ENCODE measurements at regions of chr9 and their contacts with region 1.

Region 1: DNA sequence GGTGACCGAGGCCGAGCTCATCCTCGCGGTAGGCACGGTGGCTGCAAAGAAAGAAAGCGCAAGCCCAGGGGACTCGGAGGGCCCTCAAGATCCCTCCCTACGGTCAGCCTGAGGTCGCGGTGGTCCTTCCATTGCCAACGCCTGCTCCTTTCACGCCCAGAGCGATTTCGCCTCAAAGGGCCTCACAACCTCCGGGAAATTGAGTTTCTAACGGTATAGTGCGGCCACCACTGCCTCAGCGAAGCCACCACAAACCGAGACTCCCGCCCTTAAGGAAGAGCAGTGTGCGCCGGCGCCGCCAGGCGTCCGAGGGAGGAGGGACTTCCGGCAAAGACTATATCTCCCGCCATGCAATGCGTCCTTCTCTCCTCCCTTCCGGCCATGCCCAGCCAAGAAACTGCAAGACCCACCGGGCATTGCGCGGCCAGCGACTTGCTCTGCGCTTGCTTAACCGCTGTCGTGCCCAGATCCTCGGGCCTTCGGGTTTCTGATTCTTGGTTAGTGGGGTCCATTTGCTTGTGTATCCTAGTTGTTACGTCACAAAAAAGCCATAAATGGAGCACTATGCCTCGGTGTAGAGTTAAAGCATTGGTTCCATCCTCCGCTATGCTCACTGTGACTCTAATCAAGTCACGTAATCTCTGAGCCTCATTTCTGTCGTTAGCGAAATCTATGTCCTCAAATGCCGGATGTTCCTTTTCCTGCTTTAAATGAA is at the start of gene HAUS6:
- DNase-seq: peak; percentile 92
- H3K4me3 Mint-ChIP-seq: peak within 1 kb of the TSS; percentile 94
- H3K27ac Mint-ChIP-seq: peak within 1 kb of the TSS; percentile 96
- H3K4me1 Mint-ChIP-seq: peaks cover 16% of the 10 kb centered on the region
- H3K27me3 Mint-ChIP-seq: no peaks in the 10 kb centered on the region
- total RNA-seq, gene HAUS6: 31.8 and 31.9 TPM in 2 replicates

Region 2: GRCh38 chr9:19085295-19085694 is 17.5 kb before region 1 on chr9:
- intact Hi-C with region 1: loop called (anchors 1 kb)
- DNase-seq: no peak
- H3K4me3 Mint-ChIP-seq: no peak overlapping the region
- H3K27ac Mint-ChIP-seq: peak overlapping the region; percentile 48
- H3K4me1 Mint-ChIP-seq: peaks cover 5% of the 10 kb centered on the region
- H3K27me3 Mint-ChIP-seq: no peaks in the 10 kb centered on the region

Region 3: DNA sequence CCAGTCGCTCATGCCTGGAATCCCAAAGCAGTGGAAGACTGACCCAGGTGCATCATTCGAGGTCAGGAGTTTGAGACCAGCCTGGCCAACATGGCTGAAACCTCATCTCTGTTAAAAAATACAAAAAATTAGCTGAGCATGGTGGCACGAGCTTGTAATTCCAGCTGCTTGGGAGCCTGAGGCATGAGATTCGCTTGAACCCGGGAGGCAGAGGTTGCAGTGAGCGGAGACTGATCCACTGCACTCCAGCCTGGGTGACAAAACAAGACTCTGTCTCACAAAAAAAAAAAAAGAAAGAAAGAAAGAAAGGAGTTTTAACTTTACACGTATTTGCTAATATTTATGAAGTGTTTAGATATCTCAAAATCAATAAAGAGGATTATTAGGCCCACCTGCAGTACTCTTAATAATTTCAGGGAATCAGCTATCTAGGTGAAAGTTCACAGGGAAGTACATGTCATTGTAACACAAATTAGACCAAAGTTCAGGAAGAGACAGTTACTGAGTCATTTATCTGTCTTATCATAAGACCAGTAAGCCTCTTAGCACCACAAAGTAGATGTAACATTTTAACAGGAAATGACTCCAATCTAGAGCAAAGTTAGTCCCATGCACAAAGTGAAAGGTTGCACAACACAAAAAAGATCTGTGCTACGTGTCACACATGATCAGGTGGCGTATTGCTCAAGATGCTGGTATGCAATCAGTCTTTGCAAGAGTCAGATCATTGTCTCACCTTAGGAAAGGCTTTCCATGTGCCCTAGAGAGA is 58.7 kb after region 1 on chr9:
- intact Hi-C with region 1: loop called (anchors 1 kb)
- DNase-seq: peak; percentile 60
- H3K4me3 Mint-ChIP-seq: peak overlapping the region; percentile 48
- H3K27ac Mint-ChIP-seq: peak overlapping the region; percentile 95
- H3K4me1 Mint-ChIP-seq: peaks cover 19% of the 10 kb centered on the region
- H3K27me3 Mint-ChIP-seq: no peaks in the 10 kb centered on the region

Region 4: DNA sequence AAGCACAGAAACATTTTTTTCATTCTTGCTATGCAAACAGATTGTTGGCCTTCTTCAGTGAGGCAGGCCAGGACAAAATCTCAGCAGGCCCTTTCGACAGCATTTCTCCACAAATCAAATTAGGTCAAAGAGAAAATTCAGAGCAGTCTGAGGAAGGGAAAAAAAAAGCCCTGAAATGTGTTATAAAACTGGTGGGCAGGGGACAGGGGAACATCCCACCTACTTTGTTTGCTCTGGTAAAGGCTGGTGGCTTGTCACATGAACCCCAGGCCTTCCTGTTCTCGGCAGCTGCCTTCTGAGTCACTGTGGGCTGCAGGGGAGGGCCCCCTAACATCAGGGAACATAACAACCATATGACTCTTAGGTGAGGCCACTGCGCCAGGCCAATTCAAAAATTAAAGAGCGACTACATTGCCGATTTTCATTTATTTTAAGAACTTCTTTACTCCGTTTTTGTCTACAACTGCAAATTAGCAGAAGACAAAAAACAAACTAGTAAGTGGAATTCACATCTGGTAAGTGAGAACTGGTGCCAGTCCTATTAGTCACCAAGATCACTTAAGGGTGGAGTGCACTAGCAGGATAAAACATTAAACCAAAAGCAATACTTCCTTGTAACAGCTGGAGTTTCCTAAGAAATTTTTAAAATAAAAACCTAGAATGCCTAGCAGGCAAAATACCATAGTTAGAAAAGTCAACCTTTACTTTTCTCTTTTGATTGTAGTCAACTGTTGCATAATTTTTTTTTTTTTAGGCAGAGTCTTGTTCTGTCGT is 81.5 kb after region 1 on chr9:
- intact Hi-C with region 1: loop called (anchors 1 kb)
- DNase-seq: peak; percentile 72
- H3K4me3 Mint-ChIP-seq: peak overlapping the region; percentile 67
- H3K27ac Mint-ChIP-seq: peak overlapping the region; percentile 89
- H3K4me1 Mint-ChIP-seq: peaks cover 18% of the 10 kb centered on the region
- H3K27me3 Mint-ChIP-seq: no peaks in the 10 kb centered on the region

Region 5: DNA sequence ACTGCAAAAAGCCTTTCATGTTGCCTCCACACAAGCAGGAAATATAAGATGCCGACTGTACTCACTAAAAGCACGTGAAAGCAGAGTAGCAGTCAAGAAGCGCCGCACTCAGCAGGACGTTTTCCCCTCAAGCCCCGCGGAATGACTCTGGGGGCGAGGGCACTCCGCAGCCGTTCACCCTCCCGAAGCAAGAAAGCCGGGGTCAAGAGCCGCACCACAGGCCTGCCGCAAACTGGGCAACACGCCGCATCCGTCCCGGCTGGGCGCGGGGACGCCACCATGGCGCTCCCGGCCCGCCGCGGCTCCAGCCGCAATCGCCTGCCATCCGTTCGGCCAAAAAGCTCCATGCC is 276.9 kb after region 1 on chr9:
- intact Hi-C with region 1: loop called (anchors 1 kb)
- DNase-seq: no peak
- H3K4me3 Mint-ChIP-seq: peak overlapping the region; percentile 98
- H3K27ac Mint-ChIP-seq: peak overlapping the region; percentile 98
- H3K4me1 Mint-ChIP-seq: peaks cover 61% of the 10 kb centered on the region
- H3K27me3 Mint-ChIP-seq: no peaks in the 10 kb centered on the region